K562 (cell line): ENCODE measurements at regions of chr2 and their contacts with region 1.

Region 1: DNA sequence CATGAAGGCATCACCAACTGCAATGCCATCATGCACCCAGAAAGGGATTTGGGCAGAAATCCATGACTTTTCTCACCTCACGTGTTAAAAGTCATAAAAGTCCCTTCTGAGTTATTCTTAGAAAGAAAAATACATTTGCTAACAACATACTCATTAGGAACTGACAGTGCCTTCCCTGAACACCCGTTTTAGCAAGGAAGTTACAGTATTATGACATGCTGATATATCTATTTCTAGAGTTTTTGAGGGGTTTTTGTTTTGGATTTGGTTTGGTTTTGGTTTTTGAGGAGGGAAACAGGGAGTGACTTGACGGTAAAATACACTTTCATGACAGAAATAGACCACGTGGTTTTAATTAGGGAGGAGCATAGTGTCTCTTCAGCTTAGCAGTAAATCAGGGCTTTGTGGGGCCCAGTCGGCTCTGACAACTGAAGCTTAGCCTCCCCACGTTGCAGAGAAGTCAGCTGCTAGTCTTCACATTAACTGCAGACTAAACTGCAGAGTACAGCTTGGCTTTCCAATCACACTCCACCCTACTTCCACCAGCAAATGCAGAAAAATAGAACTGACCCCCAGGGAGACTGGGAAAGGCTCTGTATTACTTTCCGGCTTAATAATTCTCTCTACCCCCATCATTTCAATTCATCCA is 141.4 kb downstream of the FAM124B start:
- DNase-seq: no peak
- ATAC-seq: no peak
- H3K4me3 ChIP-seq: no peak overlapping the region
- H3K27ac ChIP-seq: no peak overlapping the region
- H3K4me1 ChIP-seq: no peaks in the 10 kb centered on the region
- H3K27me3 ChIP-seq: no peaks in the 10 kb centered on the region
- CTCF ChIP-seq: no peak
- EP300 ChIP-seq: no peak
- POLR2A ChIP-seq: no peak
- RAD21 ChIP-seq: no peak

Region 2: GRCh38 chr2:224101820-224102630 is 158.5 kb before region 1 on chr2:
- CTCF ChIA-PET with region 1: no interaction called
- POLR2A ChIA-PET with region 1: no interaction called
- in situ Hi-C with region 1: no loop called
- intact Hi-C with region 1: no loop called
- DNase-seq: no peak
- ATAC-seq: no peak
- H3K4me3 ChIP-seq: no peak overlapping the region
- H3K27ac ChIP-seq: no peak overlapping the region
- H3K4me1 ChIP-seq: no peaks in the 10 kb centered on the region
- H3K27me3 ChIP-seq: no peaks in the 10 kb centered on the region
- CTCF ChIP-seq: no peak
- EP300 ChIP-seq: no peak
- POLR2A ChIP-seq: no peak
- RAD21 ChIP-seq: no peak

Region 3: GRCh38 chr2:224272237-224272910 is 11.9 kb after region 1 on chr2:
- CTCF ChIA-PET with region 1: no interaction called
- POLR2A ChIA-PET with region 1: no interaction called
- in situ Hi-C with region 1: no loop called
- intact Hi-C with region 1: loop called (anchors 1 kb)
- DNase-seq: no peak
- ATAC-seq: no peak
- H3K4me3 ChIP-seq: no peak overlapping the region
- H3K27ac ChIP-seq: no peak overlapping the region
- H3K4me1 ChIP-seq: no peaks in the 10 kb centered on the region; a peak in 1 of 5 replicates
- H3K27me3 ChIP-seq: no peaks in the 10 kb centered on the region
- CTCF ChIP-seq: no peak
- EP300 ChIP-seq: no peak
- POLR2A ChIP-seq: no peak
- RAD21 ChIP-seq: no peak

Region 4: GRCh38 chr2:224284134-224284946 is 23.8 kb after region 1 on chr2:
- CTCF ChIA-PET with region 1: no interaction called
- POLR2A ChIA-PET with region 1: no interaction called
- in situ Hi-C with region 1: no loop called
- intact Hi-C with region 1: no loop called
- DNase-seq: peak; percentile 3 to 15 (median 8)
- ATAC-seq: peak; percentile 67; the same call in 2 of the 3 replicates
- H3K4me3 ChIP-seq: no peak overlapping the region
- H3K27ac ChIP-seq: no peak overlapping the region
- H3K4me1 ChIP-seq: no peaks in the 10 kb centered on the region
- H3K27me3 ChIP-seq: 0 out of 5 replicates have a peak, but pooled peaks cover 0 to 2% of the 10 kb centered on the region in 2 experiments
- CTCF ChIP-seq: peak; percentile 40 to 53 (median 44); a peak in 5 of 6 replicates
- EP300 ChIP-seq: no peak
- POLR2A ChIP-seq: no peak
- RAD21 ChIP-seq: peak; percentile 92 to 93